PC-9 (cell line): ENCODE measurements at regions of chr7 and their contacts with region 1.

Region 1: GRCh38 chr7:101287032-101287431 is 34.6 kb downstream of the IFT22 start:
- DNase-seq: no peak
- H3K4me3 ChIP-seq: no peak overlapping the region
- H3K27ac ChIP-seq: no peak overlapping the region
- H3K4me1 ChIP-seq: no peaks in the 10 kb centered on the region
- H3K27me3 ChIP-seq: peaks cover 18% of the 10 kb centered on the region
- CTCF ChIP-seq: no peak

Region 2: GRCh38 chr7:100874577-100875355 is 412.3 kb before region 1 on chr7 and contains the start of gene SRRT:
- CTCF ChIA-PET with region 1: interaction called, 11 read pairs
- POLR2A ChIA-PET with region 1: no interaction called
- intact Hi-C with region 1: no loop called
- DNase-seq: peak; percentile 91 to 98
- H3K4me3 ChIP-seq: peak within 1 kb of the TSS; percentile 99
- H3K27ac ChIP-seq: peak within 1 kb of the TSS; percentile 86
- H3K4me1 ChIP-seq: peaks cover 19% of the 10 kb centered on the region
- H3K27me3 ChIP-seq: no peaks in the 10 kb centered on the region
- CTCF ChIP-seq: peak; percentile 57
- total RNA-seq, gene SRRT: 116 and 144 TPM in 2 replicates

Region 3: GRCh38 chr7:101058355-101058754 is 228.7 kb before region 1 on chr7:
- CTCF ChIA-PET with region 1: no interaction called
- POLR2A ChIA-PET with region 1: no interaction called
- intact Hi-C with region 1: loop called (anchors 1 kb)
- DNase-seq: peak in 1 of 2 experiments; percentile 58
- H3K4me3 ChIP-seq: no peak overlapping the region
- H3K27ac ChIP-seq: no peak overlapping the region
- H3K4me1 ChIP-seq: no peaks in the 10 kb centered on the region
- H3K27me3 ChIP-seq: peaks cover 61% of the 10 kb centered on the region
- CTCF ChIP-seq: no peak

Region 4: DNA sequence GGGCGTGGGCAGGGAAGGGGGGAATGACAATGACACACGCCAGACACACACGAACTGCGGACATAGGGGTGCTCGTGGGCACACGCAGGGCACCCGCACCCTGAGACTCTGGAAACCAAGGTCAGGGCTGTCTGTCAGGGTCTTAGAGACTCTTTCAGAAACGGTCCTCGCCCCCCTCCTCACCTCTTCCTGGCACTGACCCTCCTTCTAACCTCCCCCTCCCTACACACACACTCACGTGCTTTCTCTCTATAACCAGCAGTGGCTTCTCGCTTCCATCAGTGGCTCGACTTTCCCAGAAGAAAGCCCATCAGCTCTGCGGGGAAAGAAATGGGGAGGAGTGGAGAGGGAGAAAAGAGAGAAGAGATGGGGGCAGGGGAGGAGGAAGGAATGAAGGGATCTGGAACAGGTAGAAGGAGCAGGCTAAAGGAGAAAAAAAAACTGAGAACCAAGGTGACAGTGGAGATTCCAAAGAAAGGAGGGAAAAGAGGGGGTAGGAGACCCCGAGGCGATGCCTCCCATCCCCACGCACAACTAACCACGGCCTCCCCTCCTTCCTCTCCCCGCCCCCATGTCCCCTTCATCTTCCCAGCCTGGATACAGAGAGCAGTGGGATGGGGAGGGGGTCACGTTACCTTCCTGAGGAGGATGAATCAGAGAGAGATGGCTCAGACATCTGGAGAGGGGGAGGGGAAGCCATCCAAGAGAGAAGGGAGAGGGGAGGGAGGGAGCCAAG is 120.0 kb before region 1 on chr7:
- CTCF ChIA-PET with region 1: interaction called, 11 read pairs
- POLR2A ChIA-PET with region 1: interaction called, 3 read pairs
- intact Hi-C with region 1: no loop called
- DNase-seq: no peak
- H3K4me3 ChIP-seq: no peak overlapping the region
- H3K27ac ChIP-seq: no peak overlapping the region
- H3K4me1 ChIP-seq: peaks cover 30% of the 10 kb centered on the region
- H3K27me3 ChIP-seq: peaks cover 43% of the 10 kb centered on the region
- CTCF ChIP-seq: no peak

Region 5: DNA sequence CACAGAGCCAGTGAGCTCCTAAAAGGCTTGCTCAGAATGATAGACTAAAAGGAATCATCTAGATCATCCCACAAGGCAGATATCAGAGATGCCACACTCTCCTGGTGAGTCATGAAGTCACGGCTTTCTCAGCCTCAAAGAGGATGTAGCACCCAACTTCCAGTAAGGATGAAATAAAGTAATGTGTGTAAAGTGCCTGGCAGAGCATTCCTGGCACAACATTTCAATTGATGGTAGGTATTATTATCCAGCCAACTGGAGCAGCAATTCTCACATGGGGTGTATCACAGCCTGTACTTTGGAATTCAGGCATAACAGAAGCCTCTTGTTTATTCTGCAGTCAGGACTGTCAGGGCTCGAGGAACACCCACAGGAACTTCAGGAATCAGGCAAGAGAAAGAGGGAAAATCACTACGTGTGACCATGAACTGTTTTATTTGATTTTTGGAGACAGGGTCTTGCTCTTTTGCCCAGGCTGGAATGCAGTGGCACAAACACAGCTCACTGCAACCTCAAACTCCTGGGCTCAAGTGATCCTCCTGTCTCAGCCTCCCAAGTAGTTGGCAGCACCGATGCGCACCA is 101.7 kb before region 1 on chr7:
- CTCF ChIA-PET with region 1: no interaction called
- POLR2A ChIA-PET with region 1: no interaction called
- intact Hi-C with region 1: loop called (anchors 5 kb)
- DNase-seq: no peak
- H3K4me3 ChIP-seq: no peak overlapping the region
- H3K27ac ChIP-seq: no peak overlapping the region
- H3K4me1 ChIP-seq: no peaks in the 10 kb centered on the region
- H3K27me3 ChIP-seq: no peaks in the 10 kb centered on the region
- CTCF ChIP-seq: no peak

Region 6: DNA sequence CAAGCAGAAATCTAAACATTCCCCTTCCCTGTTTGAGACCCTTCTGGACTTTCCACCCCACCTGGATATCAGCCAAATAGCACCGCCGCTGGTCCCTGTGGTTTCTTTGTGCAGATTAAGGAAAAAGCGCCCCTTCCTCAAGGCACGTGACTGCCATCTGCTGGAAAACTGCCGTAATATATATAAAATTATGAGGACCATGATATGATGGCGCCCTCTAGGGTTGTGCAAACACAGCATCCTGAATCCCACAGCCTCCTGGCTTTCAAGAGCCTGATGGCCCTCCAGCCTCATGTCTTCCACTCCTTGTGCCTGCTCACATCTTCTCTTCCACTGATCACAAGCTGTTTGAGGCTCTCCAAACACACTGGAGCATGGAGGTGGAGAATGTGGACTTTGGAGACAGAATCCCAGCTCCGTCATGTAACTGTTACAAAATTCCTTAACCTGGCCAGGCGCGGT is 220.8 kb after region 1 on chr7:
- CTCF ChIA-PET with region 1: interaction called, 6 read pairs
- POLR2A ChIA-PET with region 1: no interaction called
- intact Hi-C with region 1: loop called (anchors 2 kb)
- DNase-seq: peak; percentile 46 to 70
- H3K4me3 ChIP-seq: no peak overlapping the region
- H3K27ac ChIP-seq: no peak overlapping the region
- H3K4me1 ChIP-seq: no peaks in the 10 kb centered on the region
- H3K27me3 ChIP-seq: peaks cover 57% of the 10 kb centered on the region
- CTCF ChIP-seq: peak; percentile 87

Region 7: GRCh38 chr7:101688183-101688831 is 401.3 kb after region 1 on chr7:
- CTCF ChIA-PET with region 1: no interaction called
- POLR2A ChIA-PET with region 1: no interaction called
- intact Hi-C with region 1: no loop called
- DNase-seq: peak in 1 of 2 experiments; percentile 79
- H3K4me3 ChIP-seq: peak overlapping the region; percentile 38; the same call in 1 of the 2 replicates
- H3K27ac ChIP-seq: no peak overlapping the region
- H3K4me1 ChIP-seq: peaks cover 4% of the 10 kb centered on the region
- H3K27me3 ChIP-seq: no peaks in the 10 kb centered on the region
- CTCF ChIP-seq: peak; percentile 96